Body of pancreas (tissue), 4 donors: ENCODE measurements at regions of chr6 and their contacts with region 1.

Region 1: GRCh38 chr6:122869437-122870024 is 80.5 kb downstream of the SMPDL3A start:
- DNase-seq: peak; percentile 32 to 59 (median 40)
- ATAC-seq: peak; percentile 93
- H3K4me3 ChIP-seq: no peak overlapping the region
- H3K27ac ChIP-seq: no peak overlapping the region
- H3K4me1 ChIP-seq: no peaks in the 10 kb centered on the region
- H3K27me3 ChIP-seq: no peaks in the 10 kb centered on the region
- CTCF ChIP-seq: peak; percentile 33 to 76 (median 72)
- POLR2A ChIP-seq: no peak

Region 2: GRCh38 chr6:122818866-122819265 is 50.7 kb before region 1 on chr6:
- intact Hi-C with region 1: no loop called
- DNase-seq: no peak
- ATAC-seq: no peak
- H3K4me3 ChIP-seq: no peak overlapping the region
- H3K27ac ChIP-seq: no peak overlapping the region
- H3K4me1 ChIP-seq: no peaks in the 10 kb centered on the region
- H3K27me3 ChIP-seq: no peaks in the 10 kb centered on the region
- CTCF ChIP-seq: no peak
- POLR2A ChIP-seq: no peak

Region 3: DNA sequence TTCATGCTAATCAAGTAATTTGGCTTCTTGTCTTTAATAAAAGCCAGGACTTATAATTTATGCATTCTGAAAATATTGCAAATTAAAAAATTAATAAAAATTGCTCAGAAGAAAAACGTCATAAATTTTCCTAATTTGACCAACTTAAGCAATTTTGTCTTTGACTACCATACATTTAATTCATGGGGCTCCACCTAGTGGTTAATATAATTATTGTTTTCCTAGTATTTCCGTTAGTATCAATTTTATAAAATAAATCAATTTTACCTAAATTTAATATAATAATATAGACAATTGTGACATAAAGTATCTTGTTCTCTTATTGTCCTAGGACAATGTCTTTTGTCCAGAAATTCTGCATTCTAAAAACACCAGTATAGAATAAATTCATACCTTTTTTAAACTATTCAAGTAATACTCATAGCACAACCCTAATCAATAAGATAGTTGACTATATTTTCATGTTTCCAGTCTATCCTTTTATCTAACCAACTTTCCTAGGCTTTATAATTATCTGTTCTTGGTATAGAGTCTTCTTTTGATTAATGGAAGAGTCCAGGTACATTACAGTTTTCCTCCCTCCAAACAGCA is 447.3 kb after region 1 on chr6:
- intact Hi-C with region 1: loop called (anchors 10 kb)
- DNase-seq: no peak
- ATAC-seq: no peak
- H3K4me3 ChIP-seq: no peak overlapping the region
- H3K27ac ChIP-seq: no peak overlapping the region
- H3K4me1 ChIP-seq: no peaks in the 10 kb centered on the region
- H3K27me3 ChIP-seq: no peaks in the 10 kb centered on the region
- CTCF ChIP-seq: peak; percentile 18 to 79 (median 47)
- POLR2A ChIP-seq: no peak